ENCODE measurements at regions of chr1 and their contacts with region 1.

Region 1: GRCh38 chr1:24930204-24931145 is at the start of gene RUNX3:
- DNase-seq: peak; percentile 52 to 90 (median 87)
- ATAC-seq: peak; percentile 40 to 59
- H3K4me3 ChIP-seq: peak within 1 kb of the TSS; percentile 42
- H3K27ac ChIP-seq: no peak within 1 kb of the TSS
- H3K4me1 ChIP-seq: no peaks in the 10 kb centered on the region
- H3K27me3 ChIP-seq: no peaks in the 10 kb centered on the region
- total RNA-seq, gene RUNX3: 0.79 to 1.8 (median 0.96) TPM

Region 2: GRCh38 chr1:24830680-24831272 is 99.7 kb before region 1 on chr1:
- intact Hi-C with region 1: no loop called
- DNase-seq: no peak
- ATAC-seq: peak; percentile 80 to 86
- H3K4me3 ChIP-seq: no peak overlapping the region
- H3K27ac ChIP-seq: no peak overlapping the region
- H3K4me1 ChIP-seq: peaks cover 2% of the 10 kb centered on the region
- H3K27me3 ChIP-seq: no peaks in the 10 kb centered on the region

Region 3: GRCh38 chr1:25103164-25103795 is 172.8 kb after region 1 on chr1:
- intact Hi-C with region 1: loop called in 2 of 4 experiments (anchors 10 kb)
- DNase-seq: no peak
- ATAC-seq: peak in 1 of 2 donors; percentile 5
- H3K4me3 ChIP-seq: no peak overlapping the region
- H3K27ac ChIP-seq: no peak overlapping the region
- H3K4me1 ChIP-seq: peaks cover 2% of the 10 kb centered on the region
- H3K27me3 ChIP-seq: no peaks in the 10 kb centered on the region

Region 4: GRCh38 chr1:25204797-25205480 is 274.5 kb after region 1 on chr1:
- intact Hi-C with region 1: loop called in 2 of 4 experiments (anchors 10 kb)
- DNase-seq: peak in 1 of 3 donors; percentile 6
- ATAC-seq: peak in 1 of 2 donors; percentile 56
- H3K4me3 ChIP-seq: no peak overlapping the region
- H3K27ac ChIP-seq: no peak overlapping the region
- H3K4me1 ChIP-seq: no peaks in the 10 kb centered on the region
- H3K27me3 ChIP-seq: no peaks in the 10 kb centered on the region

Measured in right cardiac atrium (tissue), 5 donors.